Posterior cingulate gyrus (tissue), 11 donors: ENCODE measurements at regions of chr16 and their contacts with region 1.

Region 1: DNA sequence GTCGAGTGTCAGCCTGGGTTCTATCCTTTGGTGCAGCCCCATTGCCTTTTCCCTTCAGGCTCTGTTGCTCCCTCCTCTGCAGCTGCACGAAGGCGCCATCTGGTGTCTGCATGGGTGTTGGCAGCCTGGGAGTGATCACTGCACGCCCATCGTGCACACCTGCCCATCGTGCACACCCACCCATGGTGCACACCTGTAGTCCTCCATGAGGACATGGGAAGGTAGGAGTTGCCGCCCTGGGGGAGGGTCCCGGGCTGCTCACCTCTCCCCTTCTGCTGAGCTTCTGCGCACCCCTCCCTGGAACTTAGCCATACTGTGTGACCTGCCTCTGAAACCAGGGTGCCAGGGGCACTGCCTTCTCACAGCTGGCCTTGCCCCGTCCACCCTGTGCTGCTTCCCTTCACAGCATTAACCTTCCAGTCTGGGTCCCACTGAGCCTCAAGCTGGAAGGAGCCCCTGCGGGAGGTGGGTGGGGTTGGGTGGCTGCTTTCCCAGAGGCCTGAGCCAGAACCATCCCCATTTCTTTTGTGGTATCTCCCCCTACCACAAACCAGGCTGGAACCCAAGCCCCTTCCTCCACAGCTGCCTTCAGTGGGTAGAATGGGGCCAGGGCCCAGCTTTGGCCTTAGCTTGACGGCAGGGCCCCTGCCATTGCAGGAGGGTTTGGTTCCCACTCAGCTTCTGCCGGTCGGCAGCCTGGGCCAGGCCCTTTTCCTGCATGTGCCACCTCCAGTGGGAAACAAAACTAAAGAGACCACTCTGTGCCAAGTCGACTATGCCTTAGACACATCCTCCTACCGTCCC is 2.9 kb downstream of the CTRL start:
- DNase-seq: peak; percentile 69 to 97 (median 84)

Region 2: DNA sequence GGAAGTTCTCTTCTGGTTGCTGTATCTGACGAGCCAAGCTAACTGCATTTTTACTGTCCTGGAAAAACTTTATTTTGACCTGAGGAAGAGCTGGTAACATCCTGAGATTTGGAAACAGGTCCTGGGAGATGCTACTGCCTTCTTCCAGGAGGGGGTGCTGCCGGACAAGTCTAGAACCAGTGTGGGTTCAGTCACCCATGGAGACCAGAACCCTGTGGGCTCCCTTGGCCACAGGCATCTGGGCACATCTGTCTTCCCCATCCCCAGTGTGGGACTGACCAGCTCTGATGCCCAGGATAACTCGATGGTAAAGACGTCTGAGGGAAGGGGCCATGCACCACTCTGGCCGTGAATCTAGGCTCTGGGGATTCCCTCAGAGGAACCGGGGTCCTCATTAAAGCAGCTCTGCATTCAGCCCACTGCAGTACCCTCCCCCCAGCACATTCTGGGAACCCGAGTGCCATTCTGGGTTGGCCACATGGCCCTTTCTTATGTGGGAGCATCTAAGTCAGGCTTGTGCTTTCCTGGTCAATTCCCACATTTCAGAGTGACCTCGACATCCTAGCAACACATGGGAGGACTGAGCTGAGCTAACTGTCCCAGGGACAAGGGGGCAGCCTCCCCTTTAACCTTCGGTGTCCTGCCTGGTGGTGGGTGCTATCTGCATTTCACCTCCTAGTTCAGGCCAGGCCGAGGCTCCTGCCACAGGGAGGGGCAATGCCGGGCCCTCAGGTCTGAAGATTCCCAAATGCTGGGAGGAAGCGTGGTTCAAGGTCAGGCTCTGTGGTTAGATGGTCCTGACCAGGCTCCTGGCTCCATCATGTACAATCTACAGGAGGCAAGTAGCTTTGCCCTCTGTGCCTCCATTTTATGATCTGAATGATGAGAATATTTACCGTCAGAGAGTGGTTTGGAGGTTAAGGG is 255.8 kb before region 1 on chr16:
- intact Hi-C with region 1: loop called (anchors 10 kb)
- DNase-seq: peak in 8 of 10 donors; percentile 39 to 95 (median 67)

Region 3: GRCh38 chr16:67883872-67884261 is 44.9 kb before region 1 on chr16:
- intact Hi-C with region 1: loop called (anchors 2 kb)
- DNase-seq: peak in 9 of 10 donors; percentile 49 to 95 (median 62)